CD4-positive, alpha-beta memory T cell (primary cell): ENCODE measurements at regions of chr19 and their contacts with region 1.

Region 1: DNA sequence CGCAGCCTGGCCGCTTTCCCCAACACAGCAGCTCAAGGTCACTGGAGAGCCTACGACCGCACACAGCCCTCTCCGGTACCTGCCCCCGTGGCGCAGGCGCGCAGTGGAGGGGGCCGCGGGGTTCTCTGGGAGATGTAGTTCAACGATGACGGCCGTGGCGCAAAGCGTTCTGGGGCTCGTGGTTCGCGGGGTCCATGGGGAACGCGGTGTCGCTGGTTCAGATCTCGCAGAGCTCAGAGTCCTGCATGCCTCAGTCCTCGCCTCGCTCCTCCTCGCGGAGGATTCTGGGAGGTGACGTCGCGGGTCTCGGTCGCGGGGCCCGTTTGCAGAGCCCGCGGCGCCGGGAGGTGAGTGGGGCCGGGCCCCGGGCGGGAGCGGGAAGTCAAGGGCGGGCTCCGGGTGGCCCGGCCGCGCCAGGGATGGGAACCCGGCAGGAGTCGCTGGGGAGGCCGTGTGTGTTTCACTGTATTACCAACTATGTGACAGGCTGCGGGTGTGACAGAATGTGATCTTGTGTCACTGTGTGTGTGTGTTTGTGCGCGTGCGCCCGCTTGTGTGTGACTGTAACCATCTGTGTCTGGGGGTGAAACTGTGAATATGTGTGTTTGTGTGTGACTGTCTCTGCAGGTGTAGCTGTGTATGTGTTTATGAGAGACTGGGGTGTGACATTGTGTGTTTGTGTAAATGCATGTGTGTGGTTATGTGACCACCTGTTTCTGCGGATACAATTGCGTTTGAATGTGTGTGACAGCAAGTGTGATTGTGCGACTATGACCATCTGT is at the start of gene ZNF527:
- DNase-seq: peak; percentile 96 to 98 (median 97)
- H3K4me3 ChIP-seq: peak within 1 kb of the TSS; percentile 63 to 86
- H3K4me3 Mint-ChIP-seq: peak within 1 kb of the TSS; percentile 97 to 100 (median 98)
- H3K27ac ChIP-seq: peak within 1 kb of the TSS; percentile 78
- H3K27ac Mint-ChIP-seq: peak within 1 kb of the TSS; percentile 97 to 99 (median 98)
- H3K4me1 ChIP-seq: peaks cover 7% of the 10 kb centered on the region
- H3K4me1 Mint-ChIP-seq: peaks cover 9 to 28% (median 16%) of the 10 kb centered on the region in 4 donors
- H3K27me3 ChIP-seq: no peaks in the 10 kb centered on the region
- H3K27me3 Mint-ChIP-seq: no peaks in the 10 kb centered on the region
- total RNA-seq, gene ZNF527: 12.7 to 13.3 TPM

Region 2: GRCh38 chr19:36528194-36528920 is 842.7 kb before region 1 on chr19 and contains the start of gene ZNF260:
- CTCF ChIA-PET with region 1: interaction called, 3 read pairs
- POLR2A ChIA-PET with region 1: interaction called, 8 read pairs
- intact Hi-C with region 1: loop called (anchors 1 kb)
- DNase-seq: peak; percentile 90 to 95 (median 93)
- H3K4me3 ChIP-seq: peak within 1 kb of the TSS; percentile 88 to 99
- H3K4me3 Mint-ChIP-seq: peak within 1 kb of the TSS; percentile 91 to 100 (median 97)
- H3K27ac ChIP-seq: peak within 1 kb of the TSS; percentile 87
- H3K27ac Mint-ChIP-seq: peak within 1 kb of the TSS; percentile 91 to 99 (median 97)
- H3K4me1 ChIP-seq: peaks cover 22% of the 10 kb centered on the region
- H3K4me1 Mint-ChIP-seq: peaks cover 17 to 29% (median 22%) of the 10 kb centered on the region in 4 donors
- H3K27me3 ChIP-seq: no peaks in the 10 kb centered on the region
- H3K27me3 Mint-ChIP-seq: no peaks in the 10 kb centered on the region
- total RNA-seq, gene ZNF260: 15.4 to 18.8 TPM

Region 3: DNA sequence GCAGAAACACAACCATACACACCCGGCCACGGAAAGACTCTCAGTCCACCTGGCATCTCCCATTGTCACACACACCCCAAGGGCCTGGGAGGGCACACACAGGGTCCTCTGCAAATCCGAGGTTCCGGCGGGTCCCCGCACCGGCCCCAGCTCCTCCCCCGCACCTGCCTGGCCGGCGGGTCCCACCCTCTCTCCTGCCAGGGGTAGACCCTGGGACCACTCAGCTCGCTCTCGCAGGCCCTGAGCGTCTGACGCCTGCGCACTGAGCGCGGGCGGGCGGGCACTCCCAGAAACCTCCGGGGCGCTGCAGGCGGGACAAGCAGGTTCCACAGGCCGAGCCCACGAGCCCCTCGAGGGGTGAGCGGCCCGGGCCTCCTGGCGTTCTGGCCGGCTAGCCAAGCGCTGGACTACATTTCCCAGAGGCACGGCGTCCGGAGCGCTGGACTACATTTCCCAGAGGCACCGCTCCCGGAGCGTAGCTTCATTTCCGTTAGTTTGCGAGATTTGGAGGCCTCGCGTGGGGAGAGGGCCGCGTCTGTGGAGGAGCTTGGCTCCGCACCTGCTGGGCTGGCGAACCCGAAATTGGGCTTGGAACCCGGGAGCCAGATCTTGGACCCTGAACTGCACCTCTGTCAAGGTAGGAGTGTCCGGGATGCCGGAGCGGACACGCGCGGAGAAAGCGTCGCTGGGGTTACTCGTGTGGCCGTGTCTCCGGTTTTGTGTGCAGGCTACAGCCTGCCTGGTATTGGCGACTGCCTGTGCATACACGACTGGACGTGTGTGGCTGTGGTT is 292.9 kb before region 1 on chr19 and contains the start of gene ZNF420:
- CTCF ChIA-PET with region 1: no interaction called
- POLR2A ChIA-PET with region 1: interaction called, 7 read pairs
- intact Hi-C with region 1: loop called (anchors 2 kb)
- DNase-seq: peak; percentile 85 to 92 (median 87)
- H3K4me3 ChIP-seq: peak within 1 kb of the TSS; percentile 61 to 88
- H3K4me3 Mint-ChIP-seq: peak within 1 kb of the TSS; percentile 90 to 100 (median 98)
- H3K27ac ChIP-seq: peak within 1 kb of the TSS; percentile 73
- H3K27ac Mint-ChIP-seq: peak within 1 kb of the TSS; percentile 85 to 99 (median 95)
- H3K4me1 ChIP-seq: peaks cover 23% of the 10 kb centered on the region
- H3K4me1 Mint-ChIP-seq: peaks cover 22 to 43% (median 27%) of the 10 kb centered on the region in 4 donors
- H3K27me3 ChIP-seq: no peaks in the 10 kb centered on the region
- H3K27me3 Mint-ChIP-seq: no peaks in the 10 kb centered on the region
- total RNA-seq, gene ZNF420: 25.0 to 28.6 TPM

Region 4: GRCh38 chr19:37334179-37335071 is 36.6 kb before region 1 on chr19:
- CTCF ChIA-PET with region 1: interaction called, 7 read pairs
- POLR2A ChIA-PET with region 1: interaction called, 32 read pairs
- intact Hi-C with region 1: loop called (anchors 1 kb)
- DNase-seq: peak; percentile 84 to 96 (median 90)
- H3K4me3 ChIP-seq: peak overlapping the region; percentile 71 to 83
- H3K4me3 Mint-ChIP-seq: peak overlapping the region; percentile 89 to 95 (median 92)
- H3K27ac ChIP-seq: peak overlapping the region; percentile 80
- H3K27ac Mint-ChIP-seq: peak overlapping the region; percentile 89 to 98 (median 95)
- H3K4me1 ChIP-seq: peaks cover 12% of the 10 kb centered on the region
- H3K4me1 Mint-ChIP-seq: peaks cover 20 to 42% (median 31%) of the 10 kb centered on the region in 4 donors
- H3K27me3 ChIP-seq: no peaks in the 10 kb centered on the region
- H3K27me3 Mint-ChIP-seq: no peaks in the 10 kb centered on the region

Region 5: GRCh38 chr19:37691881-37692504 is 320.9 kb after region 1 on chr19:
- CTCF ChIA-PET with region 1: no interaction called
- POLR2A ChIA-PET with region 1: interaction called, 10 read pairs
- intact Hi-C with region 1: no loop called
- DNase-seq: peak; percentile 70 to 78 (median 73)
- H3K4me3 ChIP-seq: peak overlapping the region; percentile 61 to 80
- H3K4me3 Mint-ChIP-seq: peak overlapping the region; percentile 84 to 98 (median 95)
- H3K27ac ChIP-seq: peak overlapping the region; percentile 49
- H3K27ac Mint-ChIP-seq: peak overlapping the region; percentile 79 to 97 (median 93)
- H3K4me1 ChIP-seq: peaks cover 6% of the 10 kb centered on the region
- H3K4me1 Mint-ChIP-seq: peaks cover 4 to 22% (median 10%) of the 10 kb centered on the region in 4 donors
- H3K27me3 ChIP-seq: no peaks in the 10 kb centered on the region
- H3K27me3 Mint-ChIP-seq: no peaks in the 10 kb centered on the region